WTC11 (cell line): ENCODE measurements at regions of chrX and their contacts with region 1.

Region 1: GRCh38 chrX:118807151-118808017 is 16.2 kb upstream of the ZCCHC12 start:
- DNase-seq: peak; percentile 36
- ATAC-seq: peak; percentile 81
- H3K4me3 Mint-ChIP-seq: no peak overlapping the region
- H3K27ac Mint-ChIP-seq: no peak overlapping the region
- H3K4me1 Mint-ChIP-seq: no peaks in the 10 kb centered on the region
- H3K27me3 Mint-ChIP-seq: no peaks in the 10 kb centered on the region; the same call in 1 of the 2 replicates
- CTCF ChIP-seq: peak; percentile 24; the same call in 1 of the 2 replicates

Region 2: GRCh38 chrX:118761939-118762707 is 45.3 kb before region 1 on chrX:
- CTCF ChIA-PET with region 1: interaction called, 17 read pairs
- POLR2A ChIA-PET with region 1: no interaction called
- DNase-seq: no peak
- ATAC-seq: no peak; the same call in 1 of the 2 replicates
- H3K4me3 Mint-ChIP-seq: no peak overlapping the region
- H3K27ac Mint-ChIP-seq: no peak overlapping the region
- H3K4me1 Mint-ChIP-seq: peaks cover 11% of the 10 kb centered on the region
- H3K27me3 Mint-ChIP-seq: no peaks in the 10 kb centered on the region
- CTCF ChIP-seq: no peak

Region 3: GRCh38 chrX:118795528-118796280 is 11.7 kb before region 1 on chrX:
- CTCF ChIA-PET with region 1: no interaction called
- POLR2A ChIA-PET with region 1: no interaction called
- DNase-seq: no peak
- ATAC-seq: no peak
- H3K4me3 Mint-ChIP-seq: no peak overlapping the region
- H3K27ac Mint-ChIP-seq: no peak overlapping the region
- H3K4me1 Mint-ChIP-seq: peaks cover 18% of the 10 kb centered on the region
- H3K27me3 Mint-ChIP-seq: no peaks in the 10 kb centered on the region
- CTCF ChIP-seq: no peak